MCF 10A (cell line): ENCODE measurements at regions of chr3 and their contacts with region 1.

Region 1: DNA sequence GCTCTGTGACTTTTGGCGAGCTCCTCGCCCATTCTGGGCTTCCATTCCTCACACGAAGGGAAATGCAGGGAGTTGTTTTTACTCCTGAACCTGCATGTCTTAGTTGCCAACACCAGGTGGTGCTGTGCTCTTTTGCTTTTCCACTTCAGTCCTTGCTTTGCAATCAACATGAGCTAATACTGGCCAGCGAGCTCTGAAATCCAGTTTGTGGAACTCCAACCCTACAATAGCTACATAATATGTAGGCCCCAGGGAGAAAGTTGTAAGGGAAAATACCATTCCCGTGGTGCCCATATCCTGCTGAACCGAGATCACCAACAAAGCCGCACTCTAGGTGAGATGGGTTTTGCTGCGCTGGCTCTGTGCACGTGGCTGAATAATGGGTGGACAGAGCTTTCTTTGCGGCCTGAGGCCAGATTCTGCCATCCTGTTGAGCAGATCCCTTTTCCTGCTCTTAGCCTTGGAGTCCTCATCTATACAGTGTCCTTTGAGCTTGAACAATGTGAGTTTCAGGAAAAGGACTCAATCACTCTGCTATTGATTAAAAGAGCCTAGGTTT is 25.0 kb downstream of the LSM3 start:
- DNase-seq: peak; percentile 75
- H3K4me3 Mint-ChIP-seq: no peak overlapping the region
- H3K27ac Mint-ChIP-seq: no peak overlapping the region
- H3K4me1 Mint-ChIP-seq: peaks cover 24% of the 10 kb centered on the region
- H3K27me3 Mint-ChIP-seq: no peaks in the 10 kb centered on the region
- CTCF ChIP-seq: peak; percentile 68

Region 2: DNA sequence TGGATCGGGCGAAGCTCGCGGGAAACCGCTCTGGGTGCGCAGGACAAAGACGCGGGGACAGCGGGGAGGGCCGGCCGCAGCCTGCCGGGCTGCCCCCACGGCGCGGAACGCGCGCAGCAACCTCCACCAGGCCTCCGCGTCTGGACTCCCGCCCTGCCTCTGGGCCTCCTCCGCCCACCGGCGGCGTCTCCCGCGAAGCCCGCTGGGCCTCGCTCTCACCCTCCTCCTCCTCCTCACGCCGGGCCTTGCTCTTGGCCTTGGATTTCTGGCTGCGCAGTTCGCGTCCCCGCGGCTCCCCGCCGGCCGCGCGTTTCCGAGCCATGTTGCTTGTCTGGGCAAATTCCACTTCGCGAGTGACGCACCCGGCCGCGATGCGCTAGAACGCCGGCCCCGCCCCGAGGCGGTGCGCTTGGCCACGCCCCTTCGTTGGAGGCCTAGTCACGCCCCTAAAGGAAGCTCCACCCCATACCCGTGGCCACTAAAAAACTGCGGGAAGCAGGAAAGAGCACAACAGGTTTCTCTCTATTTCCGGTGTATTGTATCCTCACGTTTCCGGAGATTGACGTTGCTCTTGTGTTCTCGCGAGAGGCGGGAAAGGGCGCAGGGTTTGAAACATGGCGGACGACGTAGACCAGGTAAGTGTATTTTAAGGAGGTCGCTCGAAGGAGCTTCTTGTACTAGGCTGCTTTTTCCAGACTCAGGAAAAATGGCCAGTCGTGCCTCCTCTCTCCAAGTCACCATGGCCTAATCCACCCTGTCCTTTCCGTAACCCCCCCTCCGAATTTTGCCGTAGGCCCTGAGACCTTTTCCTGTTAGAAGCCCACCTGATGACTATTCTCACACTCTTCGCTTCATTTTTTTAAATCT is 25.1 kb before region 1 on chr3 and contains the starts of genes LSM3 and XPC:
- CTCF ChIA-PET with region 1: interaction called, 5 read pairs
- POLR2A ChIA-PET with region 1: interaction called, 120 read pairs
- intact Hi-C with region 1: no loop called
- DNase-seq: peak; percentile 99
- H3K4me3 Mint-ChIP-seq: peak within 1 kb of the TSS; percentile 85
- H3K27ac Mint-ChIP-seq: peak within 1 kb of the TSS; percentile 100
- H3K4me1 Mint-ChIP-seq: peaks cover 41% of the 10 kb centered on the region
- H3K27me3 Mint-ChIP-seq: no peaks in the 10 kb centered on the region
- CTCF ChIP-seq: no peak
- total RNA-seq, gene LSM3: 10.2 and 12.9 TPM in 2 replicates
- total RNA-seq, gene XPC: 73.3 and 83.6 TPM in 2 replicates

Region 3: DNA sequence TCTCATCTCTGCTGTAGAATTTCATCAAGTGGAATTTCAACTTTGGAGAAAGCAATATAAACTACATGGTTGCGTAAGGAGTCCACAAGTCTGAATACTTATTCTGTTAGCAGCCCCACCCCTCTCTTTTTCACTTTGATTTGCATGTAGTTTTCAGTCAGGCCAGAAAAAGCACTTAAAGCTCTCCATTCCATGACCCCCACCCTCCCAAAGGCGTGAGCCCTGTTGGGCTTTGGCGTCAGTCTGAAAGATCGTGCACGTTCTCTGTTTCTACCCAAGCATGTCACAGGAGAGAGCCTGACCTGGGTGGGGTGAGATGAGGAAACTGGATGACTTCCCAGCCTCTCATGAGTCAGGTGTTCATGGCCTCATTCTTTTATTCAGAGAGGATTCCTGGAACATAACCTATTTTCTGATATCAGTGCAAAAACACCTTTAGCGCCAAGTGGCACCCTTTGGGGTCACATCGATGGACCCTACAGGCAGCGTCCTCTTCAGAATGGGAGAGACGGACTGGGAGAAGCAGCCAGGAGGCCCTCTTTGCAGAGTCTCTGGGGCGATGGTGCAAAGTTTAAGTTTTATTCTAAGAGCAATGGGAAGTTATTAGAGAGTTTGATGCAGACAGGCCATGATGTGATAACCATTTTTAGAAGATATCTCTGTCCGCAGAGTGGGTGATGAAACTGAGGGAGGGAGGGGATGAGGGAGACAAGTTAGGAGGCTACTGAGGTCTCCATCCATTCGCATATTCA is 30.8 kb after region 1 on chr3:
- CTCF ChIA-PET with region 1: interaction called, 21 read pairs
- POLR2A ChIA-PET with region 1: interaction called, 13 read pairs
- intact Hi-C with region 1: no loop called
- DNase-seq: peak; percentile 85
- H3K4me3 Mint-ChIP-seq: peak overlapping the region; percentile 10
- H3K27ac Mint-ChIP-seq: peak overlapping the region; percentile 68
- H3K4me1 Mint-ChIP-seq: peaks cover 15% of the 10 kb centered on the region
- H3K27me3 Mint-ChIP-seq: no peaks in the 10 kb centered on the region
- CTCF ChIP-seq: no peak

Region 4: GRCh38 chr3:14402304-14402811 is 198.8 kb after region 1 on chr3 and contains the start of gene SLC6A6:
- CTCF ChIA-PET with region 1: interaction called, 9 read pairs
- POLR2A ChIA-PET with region 1: interaction called, 5 read pairs
- intact Hi-C with region 1: loop called (anchors 2 kb)
- DNase-seq: peak; percentile 96
- H3K4me3 Mint-ChIP-seq: peak within 1 kb of the TSS; percentile 99
- H3K27ac Mint-ChIP-seq: peak within 1 kb of the TSS; percentile 86
- H3K4me1 Mint-ChIP-seq: peaks cover 6% of the 10 kb centered on the region
- H3K27me3 Mint-ChIP-seq: no peaks in the 10 kb centered on the region
- CTCF ChIP-seq: peak; percentile 53
- total RNA-seq, gene SLC6A6: 4.6 and 7.6 TPM in 2 replicates

Region 5: DNA sequence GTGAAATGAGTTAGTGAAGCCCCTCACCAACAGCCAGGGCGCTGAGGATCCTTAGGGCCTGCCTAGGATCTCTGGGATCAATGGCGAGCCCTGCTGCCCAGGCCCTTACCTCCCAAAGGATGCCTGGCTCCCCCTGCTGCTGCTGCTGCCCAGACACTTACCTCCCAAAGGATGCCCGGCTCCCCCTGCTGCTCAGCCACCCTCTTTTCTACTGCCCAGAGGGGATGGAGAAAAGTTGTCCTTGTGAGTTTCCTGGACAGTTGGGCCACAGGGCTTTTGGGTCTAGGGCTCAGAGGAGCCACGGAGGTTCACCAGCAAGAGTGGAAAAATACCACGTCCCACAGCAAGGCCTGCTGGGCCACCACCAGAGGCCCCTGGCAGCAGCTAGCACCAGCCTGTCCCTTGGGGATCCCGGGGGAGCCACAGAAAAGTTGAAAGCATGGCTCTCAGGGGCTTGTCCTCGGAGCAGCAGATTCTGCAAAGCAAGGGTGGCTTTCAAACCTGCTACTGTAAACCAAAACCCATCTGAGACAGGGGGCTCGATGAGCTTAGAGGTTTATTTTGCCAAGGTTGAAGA is 258.2 kb after region 1 on chr3:
- CTCF ChIA-PET with region 1: interaction called, 138 read pairs
- POLR2A ChIA-PET with region 1: interaction called, 16 read pairs
- intact Hi-C with region 1: loop called (anchors 1 kb)
- DNase-seq: peak; percentile 61
- H3K4me3 Mint-ChIP-seq: no peak overlapping the region
- H3K27ac Mint-ChIP-seq: no peak overlapping the region
- H3K4me1 Mint-ChIP-seq: peaks cover 12% of the 10 kb centered on the region
- H3K27me3 Mint-ChIP-seq: no peaks in the 10 kb centered on the region
- CTCF ChIP-seq: peak; percentile 89

Region 6: GRCh38 chr3:14548321-14548729 is 344.7 kb after region 1 on chr3:
- CTCF ChIA-PET with region 1: no interaction called
- POLR2A ChIA-PET with region 1: no interaction called
- intact Hi-C with region 1: loop called (anchors 1 kb)
- DNase-seq: peak; percentile 66
- H3K4me3 Mint-ChIP-seq: no peak overlapping the region
- H3K27ac Mint-ChIP-seq: no peak overlapping the region
- H3K4me1 Mint-ChIP-seq: peaks cover 13% of the 10 kb centered on the region
- H3K27me3 Mint-ChIP-seq: peaks cover 17% of the 10 kb centered on the region
- CTCF ChIP-seq: peak; percentile 53